Adrenal gland (tissue), 19 donors: ENCODE measurements at regions of chr2 and their contacts with region 1.

Region 1: GRCh38 chr2:8754106-8754776 is 72.4 kb downstream of the ID2 start:
- DNase-seq: peak in 1 of 7 donors; percentile 9
- H3K4me3 ChIP-seq: no peak overlapping the region
- H3K27ac ChIP-seq: no peak overlapping the region
- H3K4me1 ChIP-seq: no peaks in the 10 kb centered on the region
- H3K27me3 ChIP-seq: no peaks in the 10 kb centered on the region
- CTCF ChIP-seq: no peak
- POLR2A ChIP-seq: no peak

Region 2: GRCh38 chr2:8693155-8693821 is 61.0 kb before region 1 on chr2:
- intact Hi-C with region 1: loop called in 1 of 2 experiments (anchors 10 kb)
- DNase-seq: peak in 5 of 7 donors; percentile 31 to 59 (median 46)
- H3K4me3 ChIP-seq: peak overlapping the region in 1 of 4 donors; percentile 41
- H3K27ac ChIP-seq: peak overlapping the region in 1 of 5 donors; percentile 52
- H3K4me1 ChIP-seq: peaks cover 10 to 14% of the 10 kb centered on the region in 2 donors
- H3K27me3 ChIP-seq: no peaks in the 10 kb centered on the region
- CTCF ChIP-seq: peak; percentile 20 to 67 (median 42)
- POLR2A ChIP-seq: no peak

Region 3: DNA sequence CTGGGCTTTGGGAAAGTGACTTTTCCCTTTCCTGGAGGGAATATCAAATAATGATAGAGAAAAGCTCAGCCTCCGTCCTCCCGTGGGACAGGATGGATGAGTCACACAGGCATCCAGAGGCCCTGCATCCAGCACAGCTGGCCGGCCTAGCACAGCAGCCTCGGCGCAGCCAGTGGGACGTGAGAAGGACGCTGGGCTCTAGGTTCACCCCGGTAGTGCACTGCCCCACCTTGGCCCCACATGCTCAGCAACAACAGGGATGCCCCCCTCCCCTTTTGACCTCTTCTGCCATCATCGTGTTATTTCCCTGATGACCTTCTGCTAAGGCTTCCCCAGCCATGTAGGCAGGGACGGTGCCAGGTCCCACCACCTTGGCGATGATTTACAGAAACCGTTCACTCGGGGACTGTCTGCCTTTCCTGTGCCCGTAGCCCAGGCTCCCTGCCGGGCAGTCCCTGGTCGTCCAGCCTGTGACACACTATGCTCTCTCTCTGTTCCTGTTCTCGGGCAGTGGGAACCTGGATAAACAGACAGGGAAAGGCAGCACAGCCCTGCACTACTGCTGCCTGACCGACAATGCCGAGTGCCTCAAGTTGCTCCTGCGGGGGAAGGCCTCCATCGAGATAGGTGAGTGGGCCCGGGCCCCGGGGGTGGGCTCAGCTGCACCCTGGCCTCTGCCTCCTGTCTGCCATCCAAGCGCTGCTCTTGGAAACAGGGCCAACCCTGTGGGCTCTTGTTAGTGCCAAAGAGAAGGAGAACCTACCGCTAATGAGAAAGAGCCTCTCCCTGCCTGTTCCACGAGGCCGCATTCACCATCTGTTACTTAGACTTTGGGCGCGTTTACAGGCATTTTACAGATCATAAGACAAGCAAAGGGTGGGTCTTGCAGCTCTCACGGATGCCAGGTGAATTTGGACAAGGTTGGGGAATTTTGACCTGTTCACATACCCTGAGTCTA is 624.5 kb after region 1 on chr2:
- intact Hi-C with region 1: no loop called
- DNase-seq: peak in 6 of 7 donors; percentile 63 to 79 (median 67)
- H3K4me3 ChIP-seq: no peak overlapping the region
- H3K27ac ChIP-seq: peak overlapping the region in 2 of 5 donors; percentile 65 to 79
- H3K4me1 ChIP-seq: peaks cover 10 to 19% of the 10 kb centered on the region in 2 donors
- H3K27me3 ChIP-seq: no peaks in the 10 kb centered on the region
- CTCF ChIP-seq: no peak
- POLR2A ChIP-seq: no peak